CD14-positive monocyte (primary cell): ENCODE measurements at regions of chr7 and their contacts with region 1.

Region 1: DNA sequence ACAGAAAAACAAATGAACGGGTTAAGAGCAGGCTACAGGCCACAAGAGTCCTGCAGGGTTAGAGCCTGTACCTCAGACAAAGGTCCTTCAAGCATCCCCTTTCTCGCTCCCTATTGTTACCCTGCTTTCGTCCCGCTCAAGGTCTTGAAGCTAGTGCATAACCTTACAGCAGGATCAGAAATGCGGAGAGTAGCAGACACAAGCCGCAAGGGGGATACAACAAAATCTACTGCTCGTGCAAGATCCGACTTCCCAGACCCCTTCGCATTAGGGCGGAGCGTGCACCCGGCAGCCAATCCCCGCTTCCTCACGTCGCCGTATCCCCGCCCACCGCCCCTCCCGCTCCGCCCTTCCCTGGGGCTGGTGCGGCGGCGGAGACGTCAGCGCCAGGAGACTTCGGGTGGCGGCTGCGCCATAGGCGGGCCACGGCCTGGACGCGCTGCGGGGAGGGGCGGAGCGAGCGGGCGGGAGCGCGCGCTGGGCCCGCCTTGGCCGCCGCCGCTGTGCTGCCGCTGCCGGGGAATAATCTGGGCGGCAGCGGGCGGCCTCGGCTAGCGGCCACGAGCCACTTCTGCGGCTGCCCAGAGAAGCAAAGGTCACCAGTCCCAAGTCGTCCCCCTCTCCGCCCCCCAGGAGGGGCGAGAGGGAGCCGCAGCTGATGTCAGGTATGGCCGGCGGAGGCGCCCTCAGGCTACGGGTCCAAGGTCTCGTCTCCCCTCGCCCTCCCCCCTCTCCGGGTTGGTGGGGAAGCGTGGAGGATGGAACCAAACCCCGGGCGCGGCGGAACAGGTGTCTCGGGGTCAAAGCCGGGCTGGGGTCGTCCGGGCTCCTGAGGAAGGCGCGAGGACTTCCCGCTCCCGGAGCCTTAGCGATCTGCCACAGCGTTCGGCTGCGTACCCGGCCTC is at the start of gene C1GALT1:
- DNase-seq: peak; percentile 93 to 98 (median 97)
- H3K4me3 ChIP-seq: peak within 1 kb of the TSS; percentile 84 to 99 (median 87)
- H3K4me3 Mint-ChIP-seq: peak within 1 kb of the TSS; percentile 86 to 96
- H3K27ac ChIP-seq: peak within 1 kb of the TSS; percentile 97 to 99
- H3K27ac Mint-ChIP-seq: peak within 1 kb of the TSS; percentile 96 to 99 (median 98)
- H3K4me1 ChIP-seq: peaks cover 22 to 34% of the 10 kb centered on the region in 2 donors
- H3K4me1 Mint-ChIP-seq: peaks cover 37% of the 10 kb centered on the region
- H3K27me3 ChIP-seq: no peaks in the 10 kb centered on the region
- H3K27me3 Mint-ChIP-seq: no peaks in the 10 kb centered on the region
- CTCF ChIP-seq: peak; percentile 21
- polyA plus RNA-seq, gene C1GALT1: 12.5 to 47.7 (median 45.1) TPM

Region 2: GRCh38 chr7:7122701-7123281 is 59.6 kb before region 1 on chr7:
- intact Hi-C with region 1: loop called in 1 of 2 experiments (anchors 5 kb)
- DNase-seq: peak; percentile 25 to 71 (median 60)
- H3K4me3 ChIP-seq: peak overlapping the region in 1 of 3 experiments; percentile 40
- H3K4me3 Mint-ChIP-seq: peak overlapping the region in 1 of 2 donors; percentile 35
- H3K27ac ChIP-seq: peak overlapping the region in 1 of 2 donors; percentile 66
- H3K27ac Mint-ChIP-seq: peak overlapping the region in 6 of 7 donors; percentile 21 to 83 (median 60)
- H3K4me1 ChIP-seq: peaks cover 48 to 57% of the 10 kb centered on the region in 2 donors
- H3K4me1 Mint-ChIP-seq: peaks cover 48% of the 10 kb centered on the region
- H3K27me3 ChIP-seq: no peaks in the 10 kb centered on the region
- H3K27me3 Mint-ChIP-seq: no peaks in the 10 kb centered on the region
- CTCF ChIP-seq: no peak

Region 3: DNA sequence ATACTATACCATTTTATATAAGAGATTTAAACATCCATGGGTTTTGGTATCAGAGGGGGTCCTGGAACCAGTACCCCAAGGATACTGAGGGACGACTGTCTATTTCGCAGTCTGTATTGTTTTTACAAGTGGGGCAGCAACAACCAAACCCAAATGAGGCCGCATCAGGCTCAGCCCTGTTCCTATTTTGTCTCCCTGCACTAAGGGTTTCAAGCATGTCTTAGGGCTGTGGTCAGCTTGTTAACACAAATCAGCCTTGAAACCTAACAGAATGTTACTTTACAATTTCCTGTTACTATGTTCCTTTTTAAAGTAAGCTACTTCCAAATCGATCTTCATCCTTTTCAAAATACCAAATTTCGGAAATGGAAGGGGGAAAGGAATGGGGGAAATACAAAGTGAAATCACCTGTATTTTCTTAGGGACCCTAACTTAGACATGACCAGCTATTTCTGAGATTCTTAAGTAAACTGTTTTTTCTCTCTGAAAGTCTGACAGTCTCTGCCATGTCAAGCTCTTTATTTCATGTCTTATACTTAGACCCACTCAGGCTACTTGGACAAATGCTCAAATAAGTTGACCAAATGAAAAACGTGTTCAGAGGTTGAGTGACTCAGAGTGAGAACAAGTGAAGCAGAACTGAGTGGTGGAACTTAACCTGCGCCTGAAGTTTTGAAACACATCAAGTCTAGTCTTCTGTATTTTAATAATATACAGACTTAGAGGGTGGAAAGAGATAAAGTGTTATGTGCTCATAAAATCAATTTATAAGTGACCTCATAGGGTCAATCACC is 75.7 kb after region 1 on chr7:
- intact Hi-C with region 1: loop called (anchors 2 to 5 kb)
- DNase-seq: peak; percentile 54 to 77 (median 71)
- H3K4me3 ChIP-seq: peak overlapping the region in 2 of 3 experiments; percentile 27 to 71
- H3K4me3 Mint-ChIP-seq: peak overlapping the region; percentile 6 to 82
- H3K27ac ChIP-seq: peak overlapping the region; percentile 39 to 86
- H3K27ac Mint-ChIP-seq: peak overlapping the region; percentile 87 to 94 (median 91)
- H3K4me1 ChIP-seq: peaks cover 39 to 44% of the 10 kb centered on the region in 2 donors
- H3K4me1 Mint-ChIP-seq: peaks cover 41% of the 10 kb centered on the region
- H3K27me3 ChIP-seq: no peaks in the 10 kb centered on the region
- H3K27me3 Mint-ChIP-seq: peaks cover 0 to 2% (median 0%) of the 10 kb centered on the region in 3 donors
- CTCF ChIP-seq: no peak

Region 4: GRCh38 chr7:8214244-8214824 is 1031.9 kb after region 1 on chr7:
- intact Hi-C with region 1: no loop called
- DNase-seq: no peak
- H3K4me3 ChIP-seq: no peak overlapping the region
- H3K4me3 Mint-ChIP-seq: no peak overlapping the region
- H3K27ac ChIP-seq: no peak overlapping the region
- H3K27ac Mint-ChIP-seq: no peak overlapping the region
- H3K4me1 ChIP-seq: no peaks in the 10 kb centered on the region
- H3K4me1 Mint-ChIP-seq: peaks cover 4% of the 10 kb centered on the region
- H3K27me3 ChIP-seq: no peaks in the 10 kb centered on the region
- H3K27me3 Mint-ChIP-seq: no peaks in the 10 kb centered on the region
- CTCF ChIP-seq: no peak